ENCODE measurements at regions of chr7 and their contacts with region 1.

Region 1: GRCh38 chr7:30284298-30285066 is at the start of gene ZNRF2:
- DNase-seq: peak; percentile 100
- H3K4me3 ChIP-seq: peak within 1 kb of the TSS; percentile 63 to 97 (median 70)
- H3K27ac ChIP-seq: peak within 1 kb of the TSS; percentile 93 to 100 (median 97)
- H3K4me1 ChIP-seq: peaks cover 0 to 29% (median 25%) of the 10 kb centered on the region in 4 donors
- H3K27me3 ChIP-seq: no peaks in the 10 kb centered on the region
- CTCF ChIP-seq: peak; percentile 23 to 49 (median 36)
- EP300 ChIP-seq: peak in 1 of 4 donors; percentile 2
- POLR2A ChIP-seq: peak; percentile 30 to 43
- total RNA-seq, gene ZNRF2: 17.2 to 33.8 (median 23.2) TPM

Region 2: DNA sequence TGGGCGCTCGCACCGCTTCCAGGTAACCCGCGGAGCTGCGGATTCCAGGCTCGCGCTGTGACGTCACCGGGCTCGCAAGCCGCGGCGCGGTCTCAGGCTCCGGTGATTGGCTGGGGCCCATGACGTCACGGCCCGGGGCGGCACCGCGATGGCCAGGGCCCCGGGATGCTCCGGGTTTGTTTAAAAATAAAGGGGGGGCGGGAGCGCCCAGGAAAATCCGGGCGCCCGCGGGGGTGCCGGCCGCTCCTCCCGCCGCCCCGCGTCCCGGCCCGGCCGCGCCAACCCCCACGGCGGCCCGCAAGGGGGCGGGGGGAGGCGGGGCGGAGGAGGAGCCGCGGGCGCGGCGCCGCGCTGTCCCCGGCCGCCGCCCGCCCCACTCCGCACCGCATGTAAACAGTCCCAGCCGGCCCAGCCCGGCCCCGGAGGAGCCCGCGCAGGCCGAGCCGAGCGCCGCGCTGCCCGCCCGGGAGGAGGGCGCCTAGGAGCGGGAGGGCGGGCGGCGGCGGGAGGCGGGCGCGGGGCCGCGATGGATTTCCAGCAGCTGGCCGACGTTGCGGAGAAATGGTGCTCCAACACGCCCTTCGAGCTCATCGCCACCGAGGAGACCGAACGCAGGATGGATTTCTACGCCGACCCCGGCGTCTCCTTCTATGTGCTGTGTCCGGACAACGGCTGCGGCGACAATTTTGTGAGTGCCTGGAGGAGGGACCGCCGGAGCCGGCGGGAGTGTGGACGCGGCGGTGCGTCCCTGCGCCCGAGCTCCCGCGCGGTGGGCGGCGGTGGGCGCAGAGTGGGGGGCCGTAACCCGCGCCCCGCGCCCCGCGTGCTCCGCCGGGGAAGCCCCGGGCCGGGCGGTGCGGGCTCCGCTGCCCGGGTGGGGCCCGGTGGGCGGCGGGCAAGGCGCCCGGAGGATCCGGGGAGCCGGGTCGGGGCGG is 149.6 kb before region 1 on chr7 and contains the start of gene MTURN:
- intact Hi-C with region 1: loop called (anchors 2 kb)
- DNase-seq: peak; percentile 95
- H3K4me3 ChIP-seq: peak within 1 kb of the TSS; percentile 83 to 95 (median 94)
- H3K27ac ChIP-seq: peak within 1 kb of the TSS; percentile 92 to 96 (median 96)
- H3K4me1 ChIP-seq: peaks cover 0 to 22% (median 16%) of the 10 kb centered on the region in 4 donors
- H3K27me3 ChIP-seq: no peaks in the 10 kb centered on the region
- CTCF ChIP-seq: no peak
- EP300 ChIP-seq: no peak
- POLR2A ChIP-seq: no peak
- total RNA-seq, gene MTURN: 75.9 to 102 (median 87.4) TPM

Region 3: GRCh38 chr7:30173058-30173897 is 111.2 kb before region 1 on chr7:
- intact Hi-C with region 1: loop called (anchors 5 kb)
- DNase-seq: peak; percentile 93
- H3K4me3 ChIP-seq: peak overlapping the region in 1 of 4 donors; percentile 3
- H3K27ac ChIP-seq: peak overlapping the region; percentile 76 to 87 (median 80)
- H3K4me1 ChIP-seq: peaks cover 0 to 45% (median 37%) of the 10 kb centered on the region in 4 donors
- H3K27me3 ChIP-seq: no peaks in the 10 kb centered on the region
- CTCF ChIP-seq: no peak
- EP300 ChIP-seq: no peak
- POLR2A ChIP-seq: no peak

Region 4: GRCh38 chr7:30831227-30831626 is 546.7 kb after region 1 on chr7:
- intact Hi-C with region 1: no loop called
- DNase-seq: no peak
- H3K4me3 ChIP-seq: no peak overlapping the region
- H3K27ac ChIP-seq: no peak overlapping the region
- H3K4me1 ChIP-seq: no peaks in the 10 kb centered on the region
- H3K27me3 ChIP-seq: no peaks in the 10 kb centered on the region
- CTCF ChIP-seq: no peak
- EP300 ChIP-seq: no peak
- POLR2A ChIP-seq: no peak

Measured in sigmoid colon (tissue), 7 donors.